ENCODE measurements at regions of chr22 and their contacts with region 1.

Region 1: DNA sequence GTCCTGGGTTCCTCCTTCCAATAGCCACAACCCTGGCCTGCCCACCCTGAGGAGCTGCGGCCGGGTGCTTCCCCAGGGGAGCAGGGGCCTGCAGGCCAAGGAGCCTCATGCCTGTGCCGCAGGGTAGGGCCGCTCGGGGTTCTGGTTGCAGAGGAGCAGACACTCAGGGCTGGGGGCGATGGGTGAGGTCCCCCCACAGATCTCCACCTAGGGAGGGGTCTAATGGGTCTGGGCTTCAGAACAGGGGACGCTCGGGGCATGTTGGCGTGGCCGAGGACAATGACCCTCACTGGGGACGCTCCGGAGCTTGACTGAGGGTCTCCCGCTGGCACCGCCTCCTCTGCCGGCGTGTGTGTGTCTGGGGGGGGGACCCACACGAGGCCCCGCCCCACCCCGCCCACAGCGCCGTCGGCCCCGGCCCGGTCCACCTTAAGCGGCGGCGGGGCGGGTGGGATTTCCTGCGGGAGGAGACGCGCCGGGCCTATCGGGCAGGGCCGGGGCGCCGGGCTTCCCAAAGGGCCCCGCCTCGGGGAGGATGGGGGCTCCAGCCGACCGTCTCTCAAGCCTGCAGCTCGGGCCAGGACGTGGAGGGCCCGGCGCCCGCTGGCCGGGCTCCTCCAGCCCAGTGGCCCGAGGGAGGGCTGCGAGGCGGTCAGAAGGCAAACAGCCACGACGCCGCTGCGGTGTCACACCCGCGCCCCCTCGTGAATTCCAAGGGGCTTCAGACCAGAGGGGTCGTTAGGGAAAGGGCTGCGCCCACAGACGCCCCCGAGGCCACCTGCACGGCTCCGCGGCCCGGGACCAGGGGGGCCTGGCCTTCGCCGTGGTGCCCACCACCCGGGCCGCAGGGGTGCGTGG is 636 bp upstream of the ZDHHC8 start:
- DNase-seq: peak; percentile 72
- ATAC-seq: peak; percentile 37
- H3K4me3 Mint-ChIP-seq: peak overlapping the region; percentile 46
- H3K27ac Mint-ChIP-seq: no peak overlapping the region
- H3K4me1 Mint-ChIP-seq: peaks cover 45% of the 10 kb centered on the region
- H3K27me3 Mint-ChIP-seq: no peaks in the 10 kb centered on the region
- CTCF ChIP-seq: no peak

Region 2: GRCh38 chr22:20111045-20111688 is 19.8 kb before region 1 on chr22:
- CTCF ChIA-PET with region 1: interaction called, 5 read pairs
- POLR2A ChIA-PET with region 1: interaction called, 111 read pairs
- intact Hi-C with region 1: no loop called
- DNase-seq: peak; percentile 82
- ATAC-seq: peak; percentile 80
- H3K4me3 Mint-ChIP-seq: peak overlapping the region; percentile 21
- H3K27ac Mint-ChIP-seq: peak overlapping the region; percentile 98
- H3K4me1 Mint-ChIP-seq: peaks cover 50% of the 10 kb centered on the region
- H3K27me3 Mint-ChIP-seq: no peaks in the 10 kb centered on the region
- CTCF ChIP-seq: peak; percentile 77

Region 3: GRCh38 chr22:20146777-20147176 is 15.8 kb after region 1 on chr22:
- CTCF ChIA-PET with region 1: no interaction called
- POLR2A ChIA-PET with region 1: no interaction called
- intact Hi-C with region 1: no loop called
- DNase-seq: peak; percentile 20
- ATAC-seq: peak; percentile 35
- H3K4me3 Mint-ChIP-seq: no peak overlapping the region
- H3K27ac Mint-ChIP-seq: no peak overlapping the region
- H3K4me1 Mint-ChIP-seq: peaks cover 5% of the 10 kb centered on the region
- H3K27me3 Mint-ChIP-seq: no peaks in the 10 kb centered on the region
- CTCF ChIP-seq: no peak